Activated B cell treated with CpG ODN at 0.5 μM for 24 hours (primary cell): ENCODE measurements at regions of chr6 and their contacts with region 1.

Region 1: DNA sequence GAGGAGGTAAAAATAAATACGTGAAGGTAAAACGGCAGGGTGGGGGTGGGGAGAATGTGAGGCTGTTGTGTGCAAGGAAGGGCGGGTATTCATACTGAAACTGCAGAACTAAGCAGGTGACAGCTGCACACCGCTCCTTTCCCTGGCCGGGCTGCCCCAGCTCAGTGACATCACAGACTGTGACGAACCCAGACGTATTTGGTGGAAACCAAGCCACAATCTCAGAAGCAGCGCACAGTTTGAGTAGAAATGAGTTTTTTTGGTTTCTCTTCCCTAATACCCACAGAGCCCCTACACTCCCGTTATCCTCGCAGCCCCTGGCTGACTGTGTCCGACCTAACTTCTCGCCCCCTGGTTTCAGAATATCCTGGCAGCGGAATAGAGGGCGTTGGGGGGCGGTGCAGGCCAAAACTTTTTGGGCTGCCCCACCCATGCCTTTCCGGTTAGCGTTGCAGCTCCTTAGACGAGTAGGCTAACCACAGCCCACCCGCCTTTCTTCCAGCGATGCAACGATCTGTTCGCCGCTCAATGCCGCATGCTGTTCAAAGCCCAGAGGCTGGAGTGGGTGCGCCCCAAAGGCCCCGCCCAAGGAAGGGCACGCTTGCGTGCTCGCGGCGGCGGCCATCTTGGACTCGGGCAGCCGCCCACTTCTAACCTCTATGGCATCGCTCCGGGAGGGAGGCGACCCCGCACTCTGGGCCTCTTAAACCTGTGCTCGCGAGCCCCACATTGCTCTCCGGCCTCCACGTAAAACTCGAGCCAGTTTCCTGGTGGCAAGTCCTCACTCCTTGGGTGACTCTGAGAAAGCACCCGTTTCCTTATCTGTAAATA is 9.1 kb downstream of the BAK1 start:
- DNase-seq: peak; percentile 81
- ATAC-seq: peak; percentile 84
- H3K4me3 Mint-ChIP-seq: peak overlapping the region; percentile 89
- H3K27ac Mint-ChIP-seq: peak overlapping the region; percentile 100
- H3K4me1 Mint-ChIP-seq: peaks cover 38% of the 10 kb centered on the region
- H3K27me3 Mint-ChIP-seq: no peaks in the 10 kb centered on the region
- CTCF ChIP-seq: no peak

Region 2: GRCh38 chr6:33323623-33323948 is 247.4 kb before region 1 on chr6:
- CTCF ChIA-PET with region 1: no interaction called
- POLR2A ChIA-PET with region 1: interaction called, 7 read pairs
- intact Hi-C with region 1: loop called (anchors 1 kb)
- DNase-seq: peak; percentile 38
- ATAC-seq: no peak
- H3K4me3 Mint-ChIP-seq: peak overlapping the region; percentile 95
- H3K27ac Mint-ChIP-seq: peak overlapping the region; percentile 93
- H3K4me1 Mint-ChIP-seq: peaks cover 61% of the 10 kb centered on the region
- H3K27me3 Mint-ChIP-seq: no peaks in the 10 kb centered on the region
- CTCF ChIP-seq: no peak

Region 3: DNA sequence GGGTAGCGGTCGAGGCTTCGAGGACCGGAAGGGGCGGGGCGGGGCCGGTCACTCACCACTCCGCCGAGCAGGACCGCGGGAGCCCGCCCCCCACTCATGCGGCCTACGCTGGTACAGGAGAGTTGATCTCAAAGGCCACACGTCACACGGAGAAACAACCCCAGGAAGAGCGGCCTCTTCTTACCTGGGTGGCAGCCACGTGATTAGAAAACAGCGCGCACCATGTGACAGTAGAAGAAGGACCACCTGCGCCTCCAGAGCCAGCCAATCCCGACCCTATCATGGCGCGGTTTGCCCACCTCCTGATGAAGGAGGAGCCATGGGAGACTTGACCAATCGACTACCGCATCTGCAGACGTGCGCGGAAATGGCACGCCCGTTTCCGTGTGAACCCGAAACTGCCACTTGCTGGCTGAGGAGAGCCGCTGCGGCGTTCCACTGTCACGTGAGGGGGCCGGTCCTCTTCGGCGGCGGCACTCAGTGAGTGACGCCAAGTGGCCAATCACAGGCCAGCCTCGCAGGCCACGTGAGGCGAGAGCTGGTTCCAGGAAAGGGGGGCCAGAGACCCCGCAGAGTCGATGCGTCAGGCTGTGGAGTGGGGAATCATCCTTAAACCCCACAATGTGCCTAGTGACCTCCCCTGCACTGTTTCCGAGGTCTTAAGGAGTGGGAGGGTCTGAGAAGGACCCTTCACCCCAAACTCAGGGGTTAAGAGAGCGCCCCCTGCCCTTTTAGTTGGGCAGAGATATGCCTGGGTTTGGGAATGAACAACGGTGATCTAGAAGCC is 152.9 kb before region 1 on chr6 and contains the start of gene CUTA:
- CTCF ChIA-PET with region 1: no interaction called
- POLR2A ChIA-PET with region 1: interaction called, 19 read pairs
- intact Hi-C with region 1: loop called (anchors 1 kb)
- DNase-seq: peak; percentile 92
- ATAC-seq: peak; percentile 90
- H3K4me3 Mint-ChIP-seq: peak within 1 kb of the TSS; percentile 91
- H3K27ac Mint-ChIP-seq: peak within 1 kb of the TSS; percentile 96
- H3K4me1 Mint-ChIP-seq: peaks cover 66% of the 10 kb centered on the region
- H3K27me3 Mint-ChIP-seq: no peaks in the 10 kb centered on the region
- CTCF ChIP-seq: no peak
- total RNA-seq, gene CUTA: 111 and 120 TPM in 2 replicates

Region 4: DNA sequence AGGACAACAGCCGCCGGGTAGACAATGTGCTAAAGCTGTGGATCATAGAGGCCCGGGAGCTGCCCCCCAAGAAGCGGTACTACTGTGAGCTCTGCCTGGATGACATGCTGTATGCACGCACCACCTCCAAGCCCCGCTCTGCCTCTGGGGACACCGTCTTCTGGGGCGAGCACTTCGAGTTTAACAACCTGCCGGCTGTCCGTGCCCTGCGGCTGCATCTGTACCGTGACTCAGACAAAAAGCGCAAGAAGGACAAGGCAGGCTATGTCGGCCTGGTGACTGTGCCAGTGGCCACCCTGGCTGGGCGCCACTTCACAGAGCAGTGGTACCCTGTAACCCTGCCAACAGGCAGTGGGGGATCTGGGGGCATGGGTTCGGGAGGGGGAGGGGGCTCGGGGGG is 133.4 kb before region 1 on chr6:
- CTCF ChIA-PET with region 1: no interaction called
- POLR2A ChIA-PET with region 1: no interaction called
- intact Hi-C with region 1: no loop called
- DNase-seq: no peak
- ATAC-seq: no peak
- H3K4me3 Mint-ChIP-seq: no peak overlapping the region
- H3K27ac Mint-ChIP-seq: no peak overlapping the region
- H3K4me1 Mint-ChIP-seq: peaks cover 17% of the 10 kb centered on the region
- H3K27me3 Mint-ChIP-seq: no peaks in the 10 kb centered on the region
- CTCF ChIP-seq: no peak

Region 5: DNA sequence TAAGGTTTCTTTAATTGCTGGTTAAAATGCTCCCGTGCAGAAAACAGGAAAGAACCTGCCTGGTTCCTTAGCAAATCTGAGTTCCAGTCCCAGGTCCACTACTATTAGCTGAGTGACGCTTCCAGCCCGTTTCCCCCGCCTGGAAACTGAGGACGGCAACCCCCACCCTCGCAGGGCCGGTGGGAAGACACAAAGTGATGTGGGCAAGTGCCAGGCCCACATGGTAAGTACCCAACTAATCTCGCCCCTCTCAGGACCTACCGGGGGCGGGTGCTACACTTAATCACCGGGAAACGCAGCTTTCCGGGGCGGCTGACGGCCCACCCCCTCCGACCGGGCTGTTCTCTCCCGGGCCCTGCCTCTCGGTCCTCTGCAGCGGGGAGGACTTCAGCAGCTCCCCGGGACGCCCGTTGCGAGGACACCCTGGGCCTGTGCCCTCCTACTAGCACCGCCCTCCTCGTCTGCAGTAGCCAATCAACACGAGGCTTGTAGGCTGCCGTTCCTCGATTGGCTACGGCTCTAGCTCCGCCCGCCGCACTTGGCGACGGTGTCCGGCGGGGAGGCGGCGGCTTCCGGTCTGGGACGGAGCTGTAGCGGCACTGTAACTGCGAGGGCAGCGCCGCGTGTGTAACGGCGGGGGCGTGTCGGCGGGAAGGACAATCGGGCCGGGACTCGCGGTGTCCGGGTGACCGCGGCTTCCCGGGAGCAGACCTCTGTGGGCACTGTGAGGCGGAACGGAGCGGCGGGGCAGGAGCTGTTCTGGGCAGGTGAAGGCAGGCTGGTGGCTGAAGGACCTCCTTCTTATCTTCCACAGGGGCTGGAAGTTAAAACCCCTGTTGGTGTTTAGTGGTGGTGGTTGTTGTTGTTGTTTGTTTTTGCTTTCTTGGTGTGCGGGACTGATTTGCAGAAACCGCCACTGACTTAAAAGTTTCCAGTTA is 116.7 kb before region 1 on chr6 and contains the start of gene ZBTB9:
- CTCF ChIA-PET with region 1: interaction called, 4 read pairs
- POLR2A ChIA-PET with region 1: interaction called, 13 read pairs
- intact Hi-C with region 1: loop called (anchors 1 kb)
- DNase-seq: peak; percentile 87
- ATAC-seq: peak; percentile 100
- H3K4me3 Mint-ChIP-seq: peak within 1 kb of the TSS; percentile 97
- H3K27ac Mint-ChIP-seq: peak within 1 kb of the TSS; percentile 88
- H3K4me1 Mint-ChIP-seq: peaks cover 26% of the 10 kb centered on the region
- H3K27me3 Mint-ChIP-seq: no peaks in the 10 kb centered on the region
- CTCF ChIP-seq: no peak
- total RNA-seq, gene ZBTB9: 10.7 and 12.5 TPM in 2 replicates

Region 6: DNA sequence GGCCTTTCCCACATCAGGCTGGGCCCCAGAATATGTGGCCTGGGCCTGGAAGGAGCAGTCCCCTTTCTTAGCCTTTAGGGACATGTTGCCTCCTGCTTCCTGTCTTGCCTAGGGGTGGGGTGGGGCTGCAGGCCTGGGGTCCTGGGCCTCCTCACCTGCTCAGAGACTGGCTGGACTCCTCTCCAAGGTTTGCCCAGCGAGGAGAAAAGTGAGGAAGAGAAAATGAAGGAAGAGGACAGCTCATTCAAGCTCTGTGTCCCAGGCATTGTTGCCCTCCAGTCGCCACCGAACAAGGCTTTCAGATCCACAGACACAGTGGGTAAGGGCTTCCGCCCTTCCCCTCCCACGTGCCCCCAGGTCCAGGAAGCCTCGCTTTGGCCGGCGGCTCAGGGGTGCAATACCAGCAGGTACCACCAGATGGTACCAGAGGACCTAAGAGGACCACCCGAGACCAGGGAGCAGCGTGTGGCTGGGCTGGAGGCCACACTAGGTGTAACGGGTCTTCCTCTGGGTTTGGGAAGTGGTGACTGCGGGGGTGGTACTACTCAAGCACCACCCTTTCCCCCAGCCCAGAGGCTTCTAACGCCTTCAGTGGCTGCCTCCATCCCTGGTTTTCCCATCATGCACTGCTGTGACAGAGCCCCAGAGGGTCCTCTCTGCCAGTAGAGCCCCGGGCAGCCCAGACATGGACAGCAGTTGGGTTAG is 14.5 kb after region 1 on chr6:
- CTCF ChIA-PET with region 1: interaction called, 5 read pairs
- POLR2A ChIA-PET with region 1: interaction called, 8 read pairs
- intact Hi-C with region 1: loop called (anchors 1 kb)
- DNase-seq: peak; percentile 90
- ATAC-seq: peak; percentile 94
- H3K4me3 Mint-ChIP-seq: peak overlapping the region; percentile 61
- H3K27ac Mint-ChIP-seq: peak overlapping the region; percentile 93
- H3K4me1 Mint-ChIP-seq: peaks cover 31% of the 10 kb centered on the region
- H3K27me3 Mint-ChIP-seq: no peaks in the 10 kb centered on the region
- CTCF ChIP-seq: peak; percentile 96

Region 7: DNA sequence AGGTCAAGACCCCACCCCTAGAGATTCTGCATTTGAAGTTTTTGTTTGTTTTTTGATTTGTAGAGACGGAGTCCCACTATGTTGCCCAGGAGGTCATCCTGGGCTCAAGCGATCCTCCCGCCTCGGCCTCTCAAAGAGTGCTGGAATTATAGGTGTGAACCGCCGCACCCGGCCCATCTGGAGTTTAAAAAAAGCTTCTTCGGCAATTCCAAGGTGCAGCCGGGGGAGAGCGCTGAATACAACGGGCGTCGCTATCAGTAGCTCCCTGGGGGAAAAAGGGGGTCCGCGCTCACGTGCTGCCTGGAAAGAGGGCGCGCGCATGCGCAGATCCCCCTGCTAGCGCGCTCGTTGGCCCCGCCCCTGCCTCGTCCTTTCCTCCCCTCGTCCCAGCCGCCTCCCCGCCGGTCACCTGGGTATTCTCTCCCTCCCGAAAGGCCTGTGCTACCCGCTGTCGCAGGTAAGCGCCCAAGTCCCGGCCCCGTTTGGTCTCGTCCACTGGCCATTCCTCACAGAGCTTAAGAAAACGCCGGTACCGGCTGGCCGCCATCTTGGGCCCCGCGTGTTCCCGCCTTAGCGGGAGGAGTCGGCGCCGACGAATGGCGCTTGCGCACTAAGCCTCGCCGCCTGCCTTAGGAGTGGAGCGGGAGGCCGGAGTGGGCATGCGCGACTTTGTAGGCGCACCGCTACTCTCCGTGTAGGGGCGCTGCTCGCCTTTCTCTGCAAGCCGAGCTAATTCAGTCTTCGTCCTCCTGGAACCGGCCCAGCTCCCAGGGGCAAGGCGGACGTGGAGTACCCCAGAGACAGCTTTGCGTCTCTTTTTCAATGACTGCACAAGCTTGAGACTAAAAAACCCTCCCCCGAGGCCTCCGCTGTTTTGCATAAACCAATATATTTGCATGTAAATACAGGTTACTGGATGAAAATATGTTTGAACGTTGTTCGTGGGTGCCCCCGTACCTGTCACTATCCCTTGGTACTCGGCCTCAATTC is 140.4 kb after region 1 on chr6 and contains the start of gene UQCC2:
- CTCF ChIA-PET with region 1: interaction called, 3 read pairs
- POLR2A ChIA-PET with region 1: interaction called, 11 read pairs
- intact Hi-C with region 1: no loop called
- DNase-seq: peak; percentile 93
- ATAC-seq: peak; percentile 86
- H3K4me3 Mint-ChIP-seq: peak within 1 kb of the TSS; percentile 98
- H3K27ac Mint-ChIP-seq: peak within 1 kb of the TSS; percentile 99
- H3K4me1 Mint-ChIP-seq: peaks cover 29% of the 10 kb centered on the region
- H3K27me3 Mint-ChIP-seq: no peaks in the 10 kb centered on the region
- CTCF ChIP-seq: no peak
- total RNA-seq, gene UQCC2: 26.2 and 37.5 TPM in 2 replicates